ENCODE measurements at regions of chr20 and their contacts with region 1.

Region 1: GRCh38 chr20:49928401-49929141 is 7.6 kb upstream of the RNF114 start:
- DNase-seq: peak; percentile 69
- H3K4me3 Mint-ChIP-seq: no peak overlapping the region
- H3K27ac Mint-ChIP-seq: peak overlapping the region; percentile 36
- H3K4me1 Mint-ChIP-seq: peaks cover 11% of the 10 kb centered on the region
- H3K27me3 Mint-ChIP-seq: peaks cover 11% of the 10 kb centered on the region

Region 2: GRCh38 chr20:49541733-49542513 is 386.6 kb before region 1 on chr20:
- intact Hi-C with region 1: loop called (anchors 5 kb)
- DNase-seq: peak; percentile 60
- H3K4me3 Mint-ChIP-seq: peak overlapping the region; percentile 19
- H3K27ac Mint-ChIP-seq: peak overlapping the region; percentile 97
- H3K4me1 Mint-ChIP-seq: peaks cover 26% of the 10 kb centered on the region
- H3K27me3 Mint-ChIP-seq: peaks cover 5% of the 10 kb centered on the region